Natural killer cell (primary cell): ENCODE measurements at regions of chr4 and their contacts with region 1.

Region 1: GRCh38 chr4:174222266-174222872 is 61.1 kb downstream of the FBXO8 start:
- DNase-seq: peak in 1 of 2 donors; percentile 54
- ATAC-seq: peak in 2 of 3 donors; percentile 53 to 57
- H3K4me3 ChIP-seq: no peak overlapping the region
- H3K4me3 Mint-ChIP-seq: no peak overlapping the region
- H3K27ac ChIP-seq: no peak overlapping the region
- H3K27ac Mint-ChIP-seq: no peak overlapping the region
- H3K4me1 ChIP-seq: peaks cover 10% of the 10 kb centered on the region
- H3K4me1 Mint-ChIP-seq: peaks cover 2 to 8% of the 10 kb centered on the region in 2 donors
- H3K27me3 ChIP-seq: peaks cover 23% of the 10 kb centered on the region
- H3K27me3 Mint-ChIP-seq: peaks cover 38 to 67% of the 10 kb centered on the region in 2 donors
- CTCF ChIP-seq: peak; percentile 57

Region 2: GRCh38 chr4:174318829-174319764 is 96.7 kb after region 1 on chr4:
- intact Hi-C with region 1: loop called (anchors 1 kb)
- DNase-seq: peak in 1 of 2 donors; percentile 66
- ATAC-seq: no peak
- H3K4me3 ChIP-seq: no peak overlapping the region
- H3K4me3 Mint-ChIP-seq: no peak overlapping the region
- H3K27ac ChIP-seq: no peak overlapping the region
- H3K27ac Mint-ChIP-seq: no peak overlapping the region
- H3K4me1 ChIP-seq: no peaks in the 10 kb centered on the region
- H3K4me1 Mint-ChIP-seq: no peaks in the 10 kb centered on the region
- H3K27me3 ChIP-seq: no peaks in the 10 kb centered on the region
- H3K27me3 Mint-ChIP-seq: no peaks in the 10 kb centered on the region
- CTCF ChIP-seq: peak; percentile 76